ENCODE measurements at regions of chr21 and their contacts with region 1.

Region 1: GRCh38 chr21:36169436-36170128 is 13.0 kb downstream of the DOP1B start:
- DNase-seq: no peak
- H3K4me3 ChIP-seq: no peak overlapping the region
- H3K27ac ChIP-seq: no peak overlapping the region
- H3K4me1 ChIP-seq: no peaks in the 10 kb centered on the region
- H3K27me3 ChIP-seq: no peaks in the 10 kb centered on the region
- CTCF ChIP-seq: peak; percentile 5 to 49 (median 45); a peak in 2 of 4 replicates
- EP300 ChIP-seq: no peak
- POLR2A ChIP-seq: no peak
- RAD21 ChIP-seq: peak; percentile 9 to 11; a peak in 2 of 4 replicates

Region 2: DNA sequence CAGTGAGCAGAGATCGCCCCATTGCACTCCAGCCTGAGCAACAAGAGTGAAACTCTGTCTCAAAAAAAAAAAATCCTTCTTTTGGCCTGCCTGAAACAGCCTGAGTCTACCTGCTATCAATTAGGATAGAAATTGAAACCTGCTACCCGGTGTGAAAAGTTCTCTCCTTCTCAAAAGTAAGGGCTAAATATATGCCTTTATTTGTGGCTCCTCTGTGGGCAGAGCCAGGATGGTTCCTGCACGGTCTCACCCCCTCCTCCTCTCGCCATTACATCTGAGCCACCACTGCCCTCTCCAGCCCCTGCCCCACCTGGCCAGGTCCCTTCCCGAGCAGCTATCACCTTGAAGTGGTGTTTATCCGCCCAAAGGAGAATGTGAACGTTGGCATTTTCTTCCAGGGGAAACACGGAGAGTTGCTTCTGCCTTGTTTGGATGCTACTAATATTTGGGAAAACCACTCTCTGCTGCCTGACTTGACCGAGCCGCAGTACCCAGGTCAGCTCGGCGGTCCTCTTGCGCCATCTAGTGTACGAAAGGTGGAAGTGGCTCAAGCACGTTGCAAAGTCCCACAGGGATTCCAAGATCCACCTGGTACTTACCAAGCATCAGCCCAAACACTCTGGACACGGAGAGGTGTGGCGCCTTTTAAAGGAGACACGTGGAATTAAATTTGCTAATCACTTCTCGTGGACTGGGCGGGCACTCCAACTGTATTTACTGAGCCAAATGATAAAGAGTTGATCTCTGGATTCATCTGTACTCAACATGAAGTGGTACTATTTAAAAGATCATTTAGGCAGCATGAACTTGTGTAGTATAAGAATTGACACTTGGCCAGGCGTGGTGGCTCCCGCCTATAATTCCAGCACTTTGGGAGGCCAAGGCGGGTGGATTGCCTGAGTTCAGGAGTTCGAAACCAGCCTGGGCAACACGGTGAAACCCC is 141.2 kb before region 1 on chr21:
- CTCF ChIA-PET with region 1: no interaction called
- POLR2A ChIA-PET with region 1: no interaction called
- DNase-seq: peak; percentile 50 to 85
- H3K4me3 ChIP-seq: no peak overlapping the region
- H3K27ac ChIP-seq: no peak overlapping the region
- H3K4me1 ChIP-seq: peaks cover 0 to 7% (median under 1%) of the 10 kb centered on the region in 4 experiments; a peak in 3 of 7 replicates
- H3K27me3 ChIP-seq: no peaks in the 10 kb centered on the region
- CTCF ChIP-seq: peak; percentile 93 to 96 (median 94)
- EP300 ChIP-seq: no peak
- POLR2A ChIP-seq: no peak
- RAD21 ChIP-seq: peak; percentile 99 to 100

Region 3: DNA sequence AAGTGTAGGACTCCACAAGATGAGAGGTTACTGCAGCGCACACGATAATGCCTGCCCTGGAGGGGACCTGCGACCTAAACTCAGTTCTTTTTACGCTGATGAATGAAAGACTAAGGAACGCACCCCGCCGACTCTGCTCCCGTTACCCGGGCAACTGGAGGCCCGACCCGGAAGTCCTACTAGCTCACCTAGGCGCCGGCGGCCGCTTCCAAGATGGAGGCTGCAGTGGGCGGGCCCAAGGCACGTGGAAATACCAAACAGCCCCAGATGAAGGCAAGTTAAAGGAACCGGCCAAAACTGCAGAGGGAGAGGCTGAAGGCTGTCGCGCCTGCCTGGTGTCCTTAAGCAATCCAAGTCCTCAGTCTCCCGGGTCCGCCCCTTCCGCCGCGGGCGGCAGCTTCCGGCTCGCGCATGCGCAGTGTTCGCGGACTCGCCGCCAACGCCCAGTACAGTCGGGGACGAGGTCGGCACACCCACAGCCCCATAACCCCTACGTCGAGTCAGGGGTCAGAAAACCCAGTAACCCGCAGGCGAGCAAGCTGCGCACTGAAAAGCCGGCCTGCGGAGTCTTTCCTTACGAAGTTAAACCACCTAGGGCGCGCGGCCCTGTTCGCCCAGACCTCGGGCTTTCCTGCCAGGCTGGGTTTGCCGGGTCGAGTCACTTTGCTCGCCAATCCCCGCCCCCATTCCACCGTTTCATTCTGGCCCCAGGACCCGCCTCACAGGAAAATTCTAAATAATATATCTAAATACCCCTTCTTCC is 109.2 kb before region 1 on chr21 and contains the start of gene SETD4:
- CTCF ChIA-PET with region 1: no interaction called
- POLR2A ChIA-PET with region 1: no interaction called
- DNase-seq: peak; percentile 75 to 97
- H3K4me3 ChIP-seq: peak within 1 kb of the TSS; percentile 67 to 96 (median 95)
- H3K27ac ChIP-seq: peak within 1 kb of the TSS; percentile 85
- H3K4me1 ChIP-seq: peaks cover 0 to 4% (median 3%) of the 10 kb centered on the region in 4 experiments; a peak in 5 of 7 replicates
- H3K27me3 ChIP-seq: no peaks in the 10 kb centered on the region
- CTCF ChIP-seq: no peak
- EP300 ChIP-seq: no peak
- POLR2A ChIP-seq: peak; percentile 42 to 87
- RAD21 ChIP-seq: no peak; a peak in 2 of 4 replicates
- total RNA-seq, gene SETD4: 46.6 and 47.4 TPM in 2 replicates

Region 4: GRCh38 chr21:36156339-36156814 is 13.2 kb before region 1 on chr21:
- CTCF ChIA-PET with region 1: interaction called, 11 read pairs
- POLR2A ChIA-PET with region 1: interaction called, 4 read pairs
- DNase-seq: peak; percentile 99 to 100
- H3K4me3 ChIP-seq: peak overlapping the region; percentile 72 to 91 (median 75)
- H3K27ac ChIP-seq: no peak overlapping the region
- H3K4me1 ChIP-seq: peaks cover 0 to 5% (median 2%) of the 10 kb centered on the region in 4 experiments; a peak in 5 of 7 replicates
- H3K27me3 ChIP-seq: peaks cover 5 to 21% (median 12%) of the 10 kb centered on the region in 4 experiments; a peak in 6 of 7 replicates
- CTCF ChIP-seq: no peak
- EP300 ChIP-seq: no peak
- POLR2A ChIP-seq: no peak; a peak in 1 of 3 replicates
- RAD21 ChIP-seq: no peak

Region 5: DNA sequence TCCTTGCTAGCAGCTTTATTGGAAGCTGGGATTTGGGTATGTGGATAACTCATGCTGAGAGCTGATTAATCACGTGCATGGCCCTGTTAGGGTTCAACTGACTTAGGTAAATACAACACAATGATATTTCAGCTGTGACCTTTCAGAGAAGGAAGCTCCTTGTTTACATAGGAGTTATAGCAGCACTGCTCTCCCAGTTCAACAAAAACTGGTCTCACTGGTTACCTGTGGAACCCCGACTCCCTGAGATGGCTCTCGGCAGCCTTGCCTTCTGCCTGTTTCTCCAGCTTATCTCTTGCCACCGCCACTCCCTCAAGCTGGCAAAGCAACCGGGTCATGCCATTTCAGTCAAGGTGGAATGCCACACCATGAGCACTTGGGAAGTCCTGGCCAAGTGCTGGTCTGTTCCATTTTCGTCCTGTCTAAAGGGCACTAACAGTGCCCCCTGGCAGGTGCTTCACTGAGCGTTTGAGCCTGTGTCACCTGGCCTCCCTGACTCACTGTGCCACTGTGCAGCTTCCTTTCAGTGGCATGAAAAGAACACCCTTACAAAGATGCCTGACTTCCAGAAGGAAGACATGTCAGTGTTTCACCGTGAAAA is 18.6 kb after region 1 on chr21:
- CTCF ChIA-PET with region 1: interaction called, 11 read pairs
- POLR2A ChIA-PET with region 1: no interaction called
- DNase-seq: no peak
- H3K4me3 ChIP-seq: no peak overlapping the region
- H3K27ac ChIP-seq: no peak overlapping the region
- H3K4me1 ChIP-seq: peaks cover 0 to 3% (median 0%) of the 10 kb centered on the region in 4 experiments; a peak in 2 of 7 replicates
- H3K27me3 ChIP-seq: no peaks in the 10 kb centered on the region; a peak in 1 of 7 replicates
- CTCF ChIP-seq: no peak
- EP300 ChIP-seq: no peak
- POLR2A ChIP-seq: no peak
- RAD21 ChIP-seq: no peak